ENCODE measurements at regions of chr7 and their contacts with region 1.

Region 1: GRCh38 chr7:133412942-133413341 is 160.1 kb downstream of the EXOC4 start:
- DNase-seq: no peak
- H3K4me3 Mint-ChIP-seq: no peak overlapping the region
- H3K27ac Mint-ChIP-seq: no peak overlapping the region
- H3K4me1 Mint-ChIP-seq: no peaks in the 10 kb centered on the region
- H3K27me3 Mint-ChIP-seq: no peaks in the 10 kb centered on the region
- CTCF ChIP-seq: no peak

Region 2: DNA sequence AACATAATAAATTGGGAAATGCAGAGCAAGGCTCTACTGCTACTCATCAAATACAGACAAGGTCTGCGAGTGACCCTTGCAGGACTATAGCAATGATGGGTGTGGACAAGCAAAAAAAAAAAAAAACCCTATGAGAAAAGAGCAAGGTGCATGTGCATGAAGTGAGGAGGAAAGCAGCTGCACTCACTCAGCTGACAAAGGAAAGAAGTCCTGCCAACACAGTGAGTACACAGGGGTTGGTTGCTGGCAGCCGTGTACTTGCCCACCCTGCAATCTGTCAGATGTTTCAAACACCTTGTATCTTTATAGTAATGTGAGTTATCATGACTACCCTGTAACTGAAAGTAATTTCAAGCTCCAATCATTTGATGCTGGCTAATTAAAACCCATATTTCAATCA is 351.6 kb before region 1 on chr7:
- CTCF ChIA-PET with region 1: no interaction called
- intact Hi-C with region 1: no loop called
- DNase-seq: no peak
- H3K4me3 Mint-ChIP-seq: no peak overlapping the region
- H3K27ac Mint-ChIP-seq: no peak overlapping the region
- H3K4me1 Mint-ChIP-seq: peaks cover 8% of the 10 kb centered on the region
- H3K27me3 Mint-ChIP-seq: no peaks in the 10 kb centered on the region
- CTCF ChIP-seq: no peak

Region 3: GRCh38 chr7:133478591-133479135 is 65.7 kb after region 1 on chr7:
- CTCF ChIA-PET with region 1: no interaction called
- intact Hi-C with region 1: loop called (anchors 10 kb)
- DNase-seq: no peak
- H3K4me3 Mint-ChIP-seq: no peak overlapping the region
- H3K27ac Mint-ChIP-seq: no peak overlapping the region
- H3K4me1 Mint-ChIP-seq: peaks cover 8% of the 10 kb centered on the region
- H3K27me3 Mint-ChIP-seq: no peaks in the 10 kb centered on the region
- CTCF ChIP-seq: no peak